ENCODE measurements at regions of chr2 and their contacts with region 1.

Region 1: GRCh38 chr2:135851858-135852257 is 14.9 kb upstream of the LCT start:
- DNase-seq: no peak
- H3K4me3 Mint-ChIP-seq: no peak overlapping the region
- H3K27ac Mint-ChIP-seq: no peak overlapping the region
- H3K4me1 Mint-ChIP-seq: no peaks in the 10 kb centered on the region
- H3K27me3 Mint-ChIP-seq: no peaks in the 10 kb centered on the region

Region 2: DNA sequence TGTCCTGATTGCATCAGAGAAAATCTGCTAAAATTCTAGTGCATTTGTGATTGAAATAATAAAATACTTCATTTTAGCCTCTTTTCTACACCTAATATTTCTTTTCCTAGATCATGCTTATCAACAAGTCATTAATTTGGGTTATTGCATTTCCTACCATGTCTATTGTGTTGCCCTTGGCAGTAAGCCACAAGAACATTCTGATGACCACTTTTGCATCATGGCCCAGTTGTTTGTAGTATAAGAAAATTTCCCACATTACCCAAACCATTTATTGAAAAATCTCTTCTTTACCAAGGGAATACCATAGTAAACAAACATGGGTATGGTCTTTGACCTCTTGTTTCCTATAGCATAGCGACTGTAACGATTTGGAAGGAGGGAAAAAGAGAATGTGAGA is 244.3 kb before region 1 on chr2:
- intact Hi-C with region 1: no loop called
- DNase-seq: no peak
- H3K4me3 Mint-ChIP-seq: no peak overlapping the region
- H3K27ac Mint-ChIP-seq: no peak overlapping the region
- H3K4me1 Mint-ChIP-seq: no peaks in the 10 kb centered on the region
- H3K27me3 Mint-ChIP-seq: no peaks in the 10 kb centered on the region

Region 3: GRCh38 chr2:135783439-135783838 is 68.4 kb before region 1 on chr2:
- intact Hi-C with region 1: loop called (anchors 5 kb)
- DNase-seq: no peak
- H3K4me3 Mint-ChIP-seq: no peak overlapping the region
- H3K27ac Mint-ChIP-seq: no peak overlapping the region
- H3K4me1 Mint-ChIP-seq: no peaks in the 10 kb centered on the region
- H3K27me3 Mint-ChIP-seq: no peaks in the 10 kb centered on the region

Region 4: DNA sequence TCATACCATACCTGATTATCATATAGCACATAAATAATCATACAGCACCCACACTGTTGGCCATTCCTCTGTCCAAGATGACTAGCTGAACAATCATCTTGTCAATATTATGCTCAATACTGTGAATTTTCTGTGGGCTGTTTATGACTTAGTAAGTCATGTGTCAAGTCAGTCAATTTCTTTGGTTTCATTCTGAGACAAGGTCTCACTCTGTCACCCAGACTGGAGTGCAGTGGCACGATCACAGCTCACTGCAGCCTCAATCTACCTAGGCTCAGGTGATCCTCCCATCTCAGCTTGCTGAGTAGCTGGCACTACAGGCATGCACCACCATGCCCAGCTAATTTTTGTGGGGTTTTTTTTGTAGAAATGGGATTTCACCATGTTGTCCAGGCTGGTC is 18.7 kb after region 1 on chr2:
- intact Hi-C with region 1: loop called (anchors 2 kb)
- DNase-seq: no peak
- H3K4me3 Mint-ChIP-seq: no peak overlapping the region
- H3K27ac Mint-ChIP-seq: peak overlapping the region; percentile 35
- H3K4me1 Mint-ChIP-seq: peaks cover 75% of the 10 kb centered on the region
- H3K27me3 Mint-ChIP-seq: no peaks in the 10 kb centered on the region

Region 5: DNA sequence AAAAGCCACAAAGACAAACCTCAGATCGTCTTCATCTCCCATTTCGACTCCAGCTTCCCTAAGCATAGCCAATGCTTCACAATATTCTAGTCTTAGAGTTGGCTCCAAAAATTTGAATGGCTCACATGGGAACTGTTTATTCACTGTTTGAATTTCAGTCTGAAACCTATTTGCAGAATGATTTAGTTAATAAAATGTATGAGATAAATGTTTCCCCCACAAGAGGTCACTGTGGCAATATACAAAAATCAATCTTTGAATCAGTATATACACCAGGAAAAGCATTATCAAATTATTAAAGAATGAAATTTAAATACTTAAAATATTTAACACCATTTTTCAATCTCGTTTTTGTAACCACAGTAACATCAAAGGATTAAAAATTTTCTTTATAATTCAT is 64.3 kb after region 1 on chr2:
- intact Hi-C with region 1: no loop called
- DNase-seq: no peak
- H3K4me3 Mint-ChIP-seq: no peak overlapping the region
- H3K27ac Mint-ChIP-seq: no peak overlapping the region
- H3K4me1 Mint-ChIP-seq: peaks cover 15% of the 10 kb centered on the region
- H3K27me3 Mint-ChIP-seq: no peaks in the 10 kb centered on the region